Activated naive CD4-positive, alpha-beta T cell treated with anti-CD3 and anti-CD28 coated beads, Interleukin-2, amount 10 ng/mL, durations not matched to agents 7 days and 5 days (primary cell): ENCODE measurements at regions of chr6 and their contacts with region 1.

Region 1: DNA sequence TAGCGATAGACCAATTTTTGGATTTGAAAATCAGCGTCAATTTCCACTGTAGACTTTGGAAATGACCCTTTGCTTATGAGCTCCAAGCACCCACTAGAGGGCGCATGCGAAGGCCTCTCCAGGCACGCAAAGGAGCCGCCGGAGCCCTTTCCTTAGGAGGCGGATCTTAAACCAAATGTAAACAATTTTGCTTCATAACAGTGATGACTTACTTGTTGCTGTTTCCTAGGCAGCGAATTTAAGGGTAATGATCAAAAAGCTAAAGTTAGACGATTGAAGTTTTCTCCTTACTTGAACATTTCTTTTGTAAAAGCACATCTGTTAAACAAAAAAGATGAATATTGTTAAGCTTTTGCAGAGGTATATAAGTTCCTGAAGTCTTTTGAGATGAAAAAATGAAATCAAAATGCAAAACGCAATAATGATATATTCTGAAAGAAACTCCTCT is 29.2 kb upstream of the EXOC2 start:
- DNase-seq: peak; percentile 84
- H3K4me3 Mint-ChIP-seq: no peak overlapping the region
- H3K27ac Mint-ChIP-seq: no peak overlapping the region
- H3K4me1 Mint-ChIP-seq: peaks cover 7% of the 10 kb centered on the region
- H3K27me3 Mint-ChIP-seq: peaks cover 45% of the 10 kb centered on the region

Region 2: DNA sequence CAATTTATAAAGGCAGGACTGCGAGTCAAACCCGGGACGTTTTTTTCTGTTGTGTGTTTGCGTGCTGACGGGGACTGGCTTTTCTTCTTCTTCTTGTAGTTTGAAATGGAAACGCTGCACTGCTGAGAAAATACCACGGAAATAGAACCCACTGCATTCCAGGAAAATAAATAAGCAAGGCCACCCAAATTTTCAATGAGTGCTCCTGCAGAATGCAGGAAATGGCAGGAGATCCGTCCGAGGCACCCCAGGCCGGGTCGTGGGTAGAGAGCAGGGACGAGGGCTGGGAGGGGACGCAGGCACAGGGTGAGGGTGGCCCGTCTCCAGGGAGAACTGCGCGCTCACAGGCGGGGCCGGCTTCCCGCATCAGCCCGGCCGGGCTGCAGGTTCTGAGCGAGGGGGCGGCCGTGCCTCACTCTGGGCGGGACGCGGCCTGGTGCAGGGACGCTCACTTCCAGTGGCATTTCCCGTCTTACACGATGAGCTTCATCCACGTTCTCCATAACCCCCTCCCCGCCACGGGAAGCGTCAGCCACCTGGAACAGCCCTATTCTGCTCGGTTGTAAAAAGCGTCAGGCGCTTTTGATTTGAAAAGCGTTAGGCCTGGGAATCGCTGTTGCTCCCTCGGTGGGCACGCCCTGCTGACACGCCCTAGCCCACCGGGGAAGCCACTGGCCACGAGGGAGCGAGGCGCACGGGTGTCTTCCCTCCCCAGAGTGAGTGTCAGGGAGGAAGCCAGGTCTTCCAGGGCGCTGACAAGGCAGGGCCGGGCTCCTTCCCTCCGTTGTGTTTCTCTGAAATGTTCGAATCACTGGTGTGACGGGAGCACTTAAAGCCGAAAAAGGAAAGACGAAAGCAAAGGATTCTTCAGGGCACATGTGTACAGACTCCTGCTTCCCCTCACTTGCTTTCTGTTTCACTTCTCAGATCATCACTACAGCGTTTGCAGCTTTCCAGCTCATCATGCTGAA is 11.2 kb before region 1 on chr6:
- CTCF ChIA-PET with region 1: interaction called, 24 read pairs
- DNase-seq: peak; percentile 76
- H3K4me3 Mint-ChIP-seq: peak overlapping the region; percentile 96
- H3K27ac Mint-ChIP-seq: peak overlapping the region; percentile 99
- H3K4me1 Mint-ChIP-seq: peaks cover 35% of the 10 kb centered on the region
- H3K27me3 Mint-ChIP-seq: peaks cover 6% of the 10 kb centered on the region

Region 3: DNA sequence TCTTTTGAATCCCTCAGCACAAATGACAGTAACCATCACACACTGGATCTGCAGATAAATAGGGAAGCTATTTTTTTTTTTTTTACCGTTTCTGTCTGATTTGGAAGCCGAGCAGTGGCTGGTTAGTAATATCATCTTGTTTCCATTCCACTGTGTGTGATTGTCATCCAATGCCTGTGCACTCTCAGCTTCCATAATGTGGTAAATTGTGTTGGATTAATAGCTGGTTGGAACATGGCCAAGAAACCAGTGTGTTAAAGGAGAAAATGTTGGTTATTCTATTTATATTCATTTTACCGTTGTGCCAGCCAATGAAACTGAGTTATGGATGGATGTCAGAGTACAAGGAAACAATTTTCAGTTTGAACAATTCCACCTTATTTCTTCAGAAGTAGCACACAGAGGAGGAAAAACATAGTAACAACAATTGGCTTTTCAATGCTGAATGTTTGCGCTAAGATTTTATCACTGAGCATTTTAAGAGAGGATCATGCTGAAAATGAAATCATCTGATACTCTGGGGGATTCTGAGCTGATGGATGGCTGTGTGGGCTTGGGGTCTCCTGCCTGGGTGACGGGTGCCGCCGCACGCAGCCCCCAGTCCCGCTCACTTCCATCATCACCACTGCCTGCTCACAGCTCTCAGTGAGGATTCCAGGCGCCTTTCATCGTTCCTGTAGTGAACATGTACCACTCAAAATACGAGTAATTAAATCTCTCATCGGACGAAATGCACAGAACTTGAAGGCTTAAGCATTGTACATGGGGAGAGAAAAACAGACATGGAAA is 11.5 kb after region 1 on chr6:
- CTCF ChIA-PET with region 1: interaction called, 14 read pairs
- DNase-seq: no peak
- H3K4me3 Mint-ChIP-seq: no peak overlapping the region
- H3K27ac Mint-ChIP-seq: no peak overlapping the region
- H3K4me1 Mint-ChIP-seq: no peaks in the 10 kb centered on the region
- H3K27me3 Mint-ChIP-seq: peaks cover 13% of the 10 kb centered on the region